HEK293T (cell line): ENCODE measurements at regions of chr15 and their contacts with region 1.

Region 1: DNA sequence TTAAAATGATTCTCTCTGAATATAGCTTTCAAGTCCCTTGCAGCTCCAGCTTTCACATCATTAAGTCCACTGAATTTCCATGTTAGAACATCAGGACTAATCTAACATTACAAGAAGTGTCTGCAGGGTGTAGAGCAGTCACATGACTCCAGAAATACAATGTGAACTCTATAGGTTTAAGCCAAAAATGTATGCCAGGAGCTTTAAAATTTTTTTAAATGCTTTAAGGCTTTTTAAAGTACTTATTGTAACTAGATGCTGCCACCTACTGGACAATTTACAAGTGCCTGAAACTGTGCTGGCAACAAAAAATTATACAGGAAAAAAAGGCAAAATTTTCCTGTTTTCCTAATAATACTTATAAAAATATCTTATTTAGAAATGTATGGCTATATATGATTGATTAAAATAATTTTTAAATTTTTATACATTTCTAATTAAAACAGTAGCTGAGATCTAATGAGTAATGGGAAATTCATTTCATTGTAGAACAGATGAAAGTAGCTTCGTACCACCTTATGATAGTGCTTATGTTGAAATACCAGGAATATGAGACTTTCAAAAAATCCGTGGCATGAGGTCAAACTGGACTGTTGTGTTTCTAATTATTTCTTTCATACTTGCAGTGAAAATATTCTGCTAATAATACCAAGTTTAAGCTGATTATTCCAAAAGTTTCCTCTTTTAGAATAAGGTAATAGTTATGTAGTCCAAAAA is 25.7 kb downstream of the FSIP1 start:
- DNase-seq: peak; percentile 7

Region 2: GRCh38 chr15:37818152-37818677 is 1938.7 kb before region 1 on chr15:
- CTCF ChIA-PET with region 1: interaction called, 10 read pairs
- POLR2A ChIA-PET with region 1: no interaction called
- DNase-seq: no peak

Region 3: GRCh38 chr15:39686000-39686613 is 70.9 kb before region 1 on chr15:
- CTCF ChIA-PET with region 1: interaction called, 25 read pairs
- POLR2A ChIA-PET with region 1: no interaction called
- DNase-seq: peak; percentile 21

Region 4: GRCh38 chr15:39692356-39693327 is 64.3 kb before region 1 on chr15:
- CTCF ChIA-PET with region 1: interaction called, 25 read pairs
- POLR2A ChIA-PET with region 1: no interaction called
- DNase-seq: no peak

Region 5: DNA sequence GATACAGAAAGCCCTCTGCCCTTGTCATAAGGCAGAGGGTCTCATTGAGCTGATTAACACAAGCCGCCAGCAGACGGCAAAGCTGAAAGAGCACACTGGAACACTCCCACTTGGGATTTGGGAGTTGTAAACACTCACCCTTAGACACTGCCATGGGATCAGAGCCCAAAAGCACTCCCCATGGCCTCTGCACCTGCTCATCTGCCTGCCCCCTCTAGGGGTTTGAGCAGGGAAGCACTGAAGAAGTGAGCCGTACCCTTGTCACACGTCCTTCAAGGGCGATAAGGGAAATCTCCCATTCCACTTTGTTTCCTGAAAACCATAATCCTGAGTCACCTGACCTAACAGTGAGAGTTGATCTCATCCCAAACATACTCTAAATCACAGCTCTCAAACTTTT is 11.0 kb after region 1 on chr15:
- CTCF ChIA-PET with region 1: interaction called, 12 read pairs
- POLR2A ChIA-PET with region 1: no interaction called
- DNase-seq: no peak